Activated CD4-positive, alpha-beta memory T cell treated with anti-CD3 and anti-CD28 coated beads, Interleukin-2, amount 10 ng/mL, durations not matched to agents 7 days and 5 days (primary cell): ENCODE measurements at regions of chrX and their contacts with region 1.

Region 1: DNA sequence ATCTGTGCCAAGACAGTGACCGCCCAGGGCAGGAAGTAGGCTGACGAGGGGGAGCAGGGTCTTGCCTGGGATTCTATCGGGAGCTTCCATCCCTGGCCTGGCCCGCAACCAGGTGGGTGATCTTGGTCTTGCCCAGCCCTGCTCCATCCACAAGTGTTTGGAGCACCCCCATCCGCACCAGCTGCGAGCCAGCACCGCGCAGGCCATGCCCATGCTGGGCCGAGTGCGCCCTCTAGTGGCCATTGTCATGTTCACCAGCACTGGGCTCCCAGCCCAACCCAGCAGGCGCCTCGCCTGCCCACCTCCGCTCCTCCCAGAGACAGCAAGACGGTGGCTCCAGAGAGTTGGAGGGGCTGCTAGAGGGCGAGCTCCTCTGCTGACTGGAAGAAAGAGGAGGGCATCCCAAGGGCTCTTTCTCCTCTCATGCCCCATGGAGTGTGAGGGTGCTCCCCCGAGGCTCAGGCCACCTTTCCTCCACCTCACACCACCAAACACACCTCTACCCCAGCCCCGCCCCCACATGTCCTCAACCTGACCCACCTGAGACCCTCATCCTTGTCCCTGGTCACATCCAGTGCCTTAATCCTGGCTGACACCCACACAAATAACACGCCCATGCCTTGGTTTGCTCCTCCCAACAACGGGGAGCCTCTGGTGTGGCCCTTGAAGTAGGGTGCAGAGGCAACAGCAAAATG is 9.8 kb upstream of the ATP2B3 start:
- DNase-seq: peak; percentile 82
- H3K4me3 Mint-ChIP-seq: no peak overlapping the region
- H3K27ac Mint-ChIP-seq: no peak overlapping the region
- H3K4me1 Mint-ChIP-seq: peaks cover 1% of the 10 kb centered on the region
- H3K27me3 Mint-ChIP-seq: no peaks in the 10 kb centered on the region

Region 2: DNA sequence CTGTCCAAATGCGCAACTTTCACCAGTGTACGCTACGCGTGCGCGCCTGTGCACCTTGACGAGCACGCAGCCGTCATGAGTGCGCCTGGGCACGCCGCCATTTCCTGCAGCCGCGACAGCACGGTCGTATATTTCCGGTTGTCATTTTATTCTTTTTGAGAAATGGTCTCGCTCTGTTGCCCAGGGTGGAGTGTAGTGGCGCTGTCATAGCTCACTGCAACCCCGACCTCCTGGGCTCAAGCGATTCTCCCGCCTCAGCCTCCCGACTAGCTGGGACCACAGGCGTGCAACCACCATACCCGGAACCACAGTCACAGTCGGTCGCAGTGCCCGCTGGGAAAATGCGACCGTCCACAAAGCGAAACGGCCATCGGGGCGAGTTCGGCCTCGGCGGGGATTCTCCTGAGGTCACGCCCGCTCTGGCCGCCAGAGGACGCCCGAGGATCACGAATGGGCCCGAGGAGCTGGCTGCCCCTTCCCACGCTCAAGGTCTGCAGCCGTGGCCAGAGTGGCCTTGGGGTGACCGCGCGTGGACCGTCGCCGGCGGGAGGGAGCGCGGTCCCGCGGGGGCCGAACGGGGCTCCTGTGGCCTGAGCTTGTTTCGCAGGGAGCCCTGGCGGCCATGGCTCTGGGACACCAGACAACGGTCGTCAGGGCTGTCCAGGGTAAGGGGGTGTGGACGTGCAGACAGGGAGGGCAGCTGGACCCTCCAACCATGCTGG is 475.1 kb before region 1 on chrX:
- CTCF ChIA-PET with region 1: interaction called, 13 read pairs
- POLR2A ChIA-PET with region 1: no interaction called
- DNase-seq: peak; percentile 74
- H3K4me3 Mint-ChIP-seq: peak overlapping the region; percentile 81
- H3K27ac Mint-ChIP-seq: peak overlapping the region; percentile 91
- H3K4me1 Mint-ChIP-seq: peaks cover 24% of the 10 kb centered on the region
- H3K27me3 Mint-ChIP-seq: no peaks in the 10 kb centered on the region

Region 3: GRCh38 chrX:153381684-153382532 is 125.7 kb before region 1 on chrX:
- CTCF ChIA-PET with region 1: no interaction called
- POLR2A ChIA-PET with region 1: no interaction called
- DNase-seq: peak; percentile 40
- H3K4me3 Mint-ChIP-seq: no peak overlapping the region
- H3K27ac Mint-ChIP-seq: no peak overlapping the region
- H3K4me1 Mint-ChIP-seq: peaks cover 2% of the 10 kb centered on the region
- H3K27me3 Mint-ChIP-seq: no peaks in the 10 kb centered on the region

Region 4: DNA sequence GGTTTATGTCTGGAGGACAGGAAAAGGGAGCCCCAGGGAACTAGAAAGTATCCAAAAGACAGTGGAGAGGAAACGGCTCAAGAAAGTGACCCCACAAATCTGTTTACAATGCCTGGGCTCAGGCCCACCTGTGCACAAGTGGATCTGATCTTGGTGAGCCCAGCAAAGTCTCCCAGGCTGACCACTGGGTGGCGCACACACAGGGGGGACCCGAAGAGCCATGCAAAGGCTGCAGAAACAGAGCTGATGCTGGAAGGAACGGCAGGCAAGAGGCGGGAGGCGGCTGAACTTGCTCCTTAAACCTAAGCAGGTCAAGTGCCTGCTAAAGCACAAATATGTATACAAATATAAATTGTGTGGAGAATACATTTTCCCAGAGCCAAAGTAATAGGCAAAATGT is 46.8 kb before region 1 on chrX:
- CTCF ChIA-PET with region 1: interaction called, 10 read pairs
- POLR2A ChIA-PET with region 1: no interaction called
- DNase-seq: peak; percentile 45
- H3K4me3 Mint-ChIP-seq: no peak overlapping the region
- H3K27ac Mint-ChIP-seq: no peak overlapping the region
- H3K4me1 Mint-ChIP-seq: no peaks in the 10 kb centered on the region
- H3K27me3 Mint-ChIP-seq: no peaks in the 10 kb centered on the region

Region 5: GRCh38 chrX:153470435-153471363 is 36.9 kb before region 1 on chrX and contains the start of gene HAUS7:
- CTCF ChIA-PET with region 1: interaction called, 42 read pairs
- POLR2A ChIA-PET with region 1: interaction called, 3 read pairs
- DNase-seq: peak; percentile 87
- H3K4me3 Mint-ChIP-seq: peak within 1 kb of the TSS; percentile 79
- H3K27ac Mint-ChIP-seq: peak within 1 kb of the TSS; percentile 72
- H3K4me1 Mint-ChIP-seq: peaks cover 20% of the 10 kb centered on the region
- H3K27me3 Mint-ChIP-seq: peaks cover 4% of the 10 kb centered on the region
- total RNA-seq, gene HAUS7: 33.8 to 40.5 TPM

Region 6: DNA sequence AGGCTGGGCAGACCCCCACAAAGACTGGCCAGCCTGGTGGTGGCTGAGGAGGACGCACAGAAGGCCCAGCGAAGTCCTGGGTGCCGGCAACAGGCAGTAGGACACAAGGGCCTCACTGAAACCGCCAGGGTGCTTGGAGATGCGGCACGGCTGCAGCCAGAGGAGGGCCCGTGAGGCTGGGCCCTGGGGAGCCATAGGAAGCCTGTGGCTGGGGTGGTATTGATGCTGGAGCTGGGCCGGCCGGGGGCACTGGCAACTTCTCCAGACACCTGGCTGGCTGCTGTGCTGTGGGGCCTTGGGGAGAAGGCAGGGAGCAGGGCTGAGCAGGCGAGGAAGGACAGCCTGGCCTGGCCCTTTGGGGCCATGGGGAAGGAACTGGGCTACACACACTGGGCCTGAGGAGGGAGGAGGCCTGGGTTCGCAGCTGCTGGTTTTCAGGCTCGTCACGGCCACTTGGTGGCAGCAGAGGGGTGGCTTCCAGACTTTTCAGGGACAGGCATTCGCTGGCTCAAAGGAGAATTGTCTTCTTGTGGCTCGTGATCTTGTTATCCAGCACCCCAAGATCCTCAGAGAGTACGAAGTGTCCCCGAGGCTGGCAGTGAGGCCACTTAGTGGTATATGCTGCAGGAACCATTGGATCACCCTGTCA is 47.0 kb after region 1 on chrX:
- CTCF ChIA-PET with region 1: no interaction called
- POLR2A ChIA-PET with region 1: no interaction called
- DNase-seq: peak; percentile 63
- H3K4me3 Mint-ChIP-seq: no peak overlapping the region
- H3K27ac Mint-ChIP-seq: no peak overlapping the region
- H3K4me1 Mint-ChIP-seq: no peaks in the 10 kb centered on the region
- H3K27me3 Mint-ChIP-seq: no peaks in the 10 kb centered on the region